Activated CD4-positive, alpha-beta T cell treated with anti-CD3 and anti-CD28 coated beads, Interleukin-2, amount 10 ng/mL, durations not matched to agents 24 days and 14 days (primary cell): ENCODE measurements at regions of chr9 and their contacts with region 1.

Region 1: GRCh38 chr9:129823935-129824601 is at the start of gene TOR1A:
- DNase-seq: peak; percentile 98
- H3K4me3 Mint-ChIP-seq: peak within 1 kb of the TSS; percentile 89
- H3K27ac Mint-ChIP-seq: peak within 1 kb of the TSS; percentile 82
- H3K4me1 Mint-ChIP-seq: peaks cover 14% of the 10 kb centered on the region
- H3K27me3 Mint-ChIP-seq: no peaks in the 10 kb centered on the region
- total RNA-seq, gene TOR1A: 55.1 and 60.5 TPM in 2 replicates

Region 2: DNA sequence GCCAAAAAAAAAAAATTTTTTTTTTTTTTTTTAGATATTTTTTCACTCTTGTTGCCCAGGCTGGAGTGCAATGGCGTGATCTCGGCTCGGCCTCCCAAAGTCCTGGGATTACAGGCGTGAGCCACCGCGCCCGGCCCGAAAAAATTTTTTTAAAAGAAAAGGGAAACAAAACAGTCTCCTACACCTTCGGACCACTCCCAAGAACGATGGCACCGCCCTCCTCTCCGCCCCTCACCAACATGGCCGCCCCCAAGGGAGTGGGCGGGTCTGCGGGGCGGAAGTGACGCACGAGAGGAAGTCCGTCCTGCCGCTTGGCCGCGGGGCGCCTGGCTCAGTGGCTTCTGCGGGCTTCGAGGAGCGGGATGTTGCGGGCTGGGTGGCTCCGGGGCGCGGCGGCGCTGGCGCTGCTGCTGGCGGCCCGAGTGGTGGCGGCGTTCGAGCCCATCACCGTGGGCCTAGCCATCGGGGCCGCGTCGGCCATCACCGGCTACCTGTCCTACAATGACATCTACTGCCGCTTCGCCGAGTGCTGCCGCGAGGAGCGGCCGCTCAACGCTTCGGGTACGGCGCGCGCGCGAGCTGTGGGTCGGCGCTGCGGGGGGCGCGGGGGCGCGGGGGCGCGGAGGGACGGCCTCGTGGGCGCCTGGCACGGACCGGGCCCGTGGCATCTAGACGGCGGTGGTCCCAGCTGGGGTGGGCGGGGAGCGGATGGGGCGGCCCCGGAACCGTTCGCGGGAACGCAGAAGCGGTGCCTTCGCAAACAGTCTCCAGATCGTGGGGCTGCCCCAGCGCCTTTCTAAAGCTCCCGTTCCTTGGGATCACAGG is 21.0 kb before region 1 on chr9 and contains the start of gene TOR1B:
- intact Hi-C with region 1: loop called (anchors 1 kb)
- DNase-seq: peak; percentile 99
- H3K4me3 Mint-ChIP-seq: peak within 1 kb of the TSS; percentile 94
- H3K27ac Mint-ChIP-seq: peak within 1 kb of the TSS; percentile 91
- H3K4me1 Mint-ChIP-seq: peaks cover 20% of the 10 kb centered on the region
- H3K27me3 Mint-ChIP-seq: no peaks in the 10 kb centered on the region
- total RNA-seq, gene TOR1B: 22.7 and 24.1 TPM in 2 replicates

Region 3: GRCh38 chr9:129835021-129835871 is 11.2 kb after region 1 on chr9 and contains the starts of genes C9orf78 and USP20:
- intact Hi-C with region 1: loop called (anchors 1 kb)
- DNase-seq: peak; percentile 99
- H3K4me3 Mint-ChIP-seq: peak within 1 kb of the TSS; percentile 93
- H3K27ac Mint-ChIP-seq: peak within 1 kb of the TSS; percentile 95
- H3K4me1 Mint-ChIP-seq: peaks cover 50% of the 10 kb centered on the region
- H3K27me3 Mint-ChIP-seq: no peaks in the 10 kb centered on the region
- total RNA-seq, gene C9orf78: 59.9 and 60.9 TPM in 2 replicates
- total RNA-seq, gene USP20: 44.3 and 47.2 TPM in 2 replicates

Region 4: GRCh38 chr9:129863059-129863690 is 39.1 kb after region 1 on chr9:
- intact Hi-C with region 1: no loop called
- DNase-seq: peak; percentile 93
- H3K4me3 Mint-ChIP-seq: peak overlapping the region; percentile 77
- H3K27ac Mint-ChIP-seq: peak overlapping the region; percentile 93
- H3K4me1 Mint-ChIP-seq: peaks cover 64% of the 10 kb centered on the region
- H3K27me3 Mint-ChIP-seq: no peaks in the 10 kb centered on the region

Region 5: DNA sequence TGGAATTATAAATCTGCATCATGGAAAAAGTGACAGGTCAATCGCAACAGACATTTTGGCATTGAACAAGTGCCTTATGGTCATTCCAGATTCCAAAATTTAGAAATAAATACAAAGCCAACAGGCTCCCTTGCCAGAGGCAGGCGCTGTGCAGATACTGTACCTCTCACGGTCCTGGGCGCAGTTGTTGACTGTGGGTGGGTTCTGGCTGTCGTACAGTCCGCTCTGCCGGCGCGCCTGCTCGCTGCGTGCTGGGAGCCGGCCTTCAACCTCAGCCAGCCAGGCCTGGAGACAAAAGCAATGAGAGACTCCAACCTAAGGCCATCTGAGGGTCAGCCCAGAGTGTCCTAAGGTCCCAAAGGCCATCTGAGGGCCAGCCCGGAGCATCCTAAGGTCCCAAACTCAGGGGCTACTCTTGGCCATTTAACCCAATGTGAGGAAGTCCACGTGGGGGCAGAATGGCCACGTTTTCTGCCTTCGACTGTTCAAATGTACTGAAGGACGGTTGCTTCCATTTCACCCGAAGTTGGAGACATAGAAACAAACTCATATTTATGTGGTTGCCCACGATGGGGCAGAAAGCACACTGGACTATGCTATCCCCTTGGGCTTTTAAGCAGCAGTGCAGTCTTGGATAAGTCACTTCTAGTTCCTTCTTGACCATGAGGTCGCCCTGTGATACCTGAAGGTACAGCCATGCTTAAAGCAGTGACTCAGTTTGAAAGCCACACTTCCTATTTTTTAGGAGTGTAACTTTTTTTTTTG is 76.4 kb after region 1 on chr9:
- intact Hi-C with region 1: no loop called
- DNase-seq: no peak
- H3K4me3 Mint-ChIP-seq: no peak overlapping the region
- H3K27ac Mint-ChIP-seq: peak overlapping the region; percentile 77
- H3K4me1 Mint-ChIP-seq: peaks cover 52% of the 10 kb centered on the region
- H3K27me3 Mint-ChIP-seq: no peaks in the 10 kb centered on the region